GM12878 (cell line): ENCODE measurements at regions of chr2 and their contacts with region 1.

Region 1: DNA sequence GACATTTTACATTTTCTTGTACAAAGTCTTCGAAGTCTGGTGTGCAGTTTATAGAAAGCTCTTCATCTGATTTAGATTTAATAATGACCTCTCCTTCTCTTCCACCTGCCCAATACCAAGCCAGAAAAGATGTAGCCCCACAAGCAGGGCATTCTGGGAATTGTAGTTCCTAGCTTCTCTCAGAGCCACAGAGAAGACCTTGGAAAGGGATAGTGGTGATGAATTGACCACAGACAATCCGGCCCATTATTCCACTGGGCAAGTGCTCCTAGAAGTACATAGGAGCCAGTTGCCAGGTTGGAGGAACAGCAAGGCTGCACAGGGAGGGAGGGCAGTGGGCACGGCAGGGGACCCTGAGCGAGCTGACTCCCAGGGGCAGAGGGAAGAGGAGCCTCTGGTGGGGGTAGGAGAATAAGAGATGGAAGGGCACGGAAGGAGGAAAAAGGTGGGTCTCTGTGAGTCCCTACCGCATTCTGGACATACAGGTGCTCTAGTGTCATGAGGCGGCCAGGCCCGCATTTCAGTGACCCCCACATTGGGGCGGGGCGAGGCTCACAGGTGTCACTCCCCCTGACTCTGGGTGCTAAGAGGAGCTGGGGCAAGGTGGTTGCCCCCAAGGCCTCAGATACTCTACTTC is 152.5 kb upstream of the HAAO start:
- DNase-seq: no peak
- ATAC-seq: peak; percentile 39; the same call in 2 of the 3 replicates
- H3K4me3 ChIP-seq: no peak overlapping the region
- H3K27ac ChIP-seq: no peak overlapping the region
- H3K4me1 ChIP-seq: no peaks in the 10 kb centered on the region
- H3K27me3 ChIP-seq: no peaks in the 10 kb centered on the region
- CTCF ChIP-seq: no peak
- EP300 ChIP-seq: no peak
- POLR2A ChIP-seq: no peak
- RAD21 ChIP-seq: no peak

Region 2: GRCh38 chr2:42859006-42859552 is 85.8 kb before region 1 on chr2:
- CTCF ChIA-PET with region 1: interaction called, 51 read pairs
- POLR2A ChIA-PET with region 1: no interaction called
- RAD21 ChIA-PET with region 1: interaction called, 7 read pairs
- SMC1A ChIA-PET with region 1: interaction called, 12 read pairs
- in situ Hi-C with region 1: no loop called
- intact Hi-C with region 1: loop called (anchors 5 kb)
- DNase-seq: peak; percentile 52
- ATAC-seq: peak; percentile 70
- H3K4me3 ChIP-seq: no peak overlapping the region
- H3K27ac ChIP-seq: no peak overlapping the region
- H3K4me1 ChIP-seq: no peaks in the 10 kb centered on the region
- H3K27me3 ChIP-seq: peaks cover 0 to 2% of the 10 kb centered on the region in 2 experiments; a peak in 1 of 4 replicates
- CTCF ChIP-seq: peak; percentile 68 to 90 (median 86)
- EP300 ChIP-seq: no peak
- POLR2A ChIP-seq: no peak
- RAD21 ChIP-seq: peak; percentile 94

Region 3: GRCh38 chr2:42974721-42975717 is 30.1 kb after region 1 on chr2:
- CTCF ChIA-PET with region 1: interaction called, 18 read pairs
- POLR2A ChIA-PET with region 1: no interaction called
- RAD21 ChIA-PET with region 1: interaction called, 16 read pairs
- SMC1A ChIA-PET with region 1: interaction called, 4 read pairs
- in situ Hi-C with region 1: no loop called
- intact Hi-C with region 1: no loop called
- DNase-seq: no peak
- ATAC-seq: peak; percentile 67
- H3K4me3 ChIP-seq: no peak overlapping the region
- H3K27ac ChIP-seq: no peak overlapping the region
- H3K4me1 ChIP-seq: peaks cover 14% of the 10 kb centered on the region
- H3K27me3 ChIP-seq: peaks cover 0 to 1% of the 10 kb centered on the region in 2 experiments; a peak in 1 of 4 replicates
- CTCF ChIP-seq: peak; percentile 56 to 88 (median 83)
- EP300 ChIP-seq: no peak
- POLR2A ChIP-seq: no peak
- RAD21 ChIP-seq: peak; percentile 77

Region 4: DNA sequence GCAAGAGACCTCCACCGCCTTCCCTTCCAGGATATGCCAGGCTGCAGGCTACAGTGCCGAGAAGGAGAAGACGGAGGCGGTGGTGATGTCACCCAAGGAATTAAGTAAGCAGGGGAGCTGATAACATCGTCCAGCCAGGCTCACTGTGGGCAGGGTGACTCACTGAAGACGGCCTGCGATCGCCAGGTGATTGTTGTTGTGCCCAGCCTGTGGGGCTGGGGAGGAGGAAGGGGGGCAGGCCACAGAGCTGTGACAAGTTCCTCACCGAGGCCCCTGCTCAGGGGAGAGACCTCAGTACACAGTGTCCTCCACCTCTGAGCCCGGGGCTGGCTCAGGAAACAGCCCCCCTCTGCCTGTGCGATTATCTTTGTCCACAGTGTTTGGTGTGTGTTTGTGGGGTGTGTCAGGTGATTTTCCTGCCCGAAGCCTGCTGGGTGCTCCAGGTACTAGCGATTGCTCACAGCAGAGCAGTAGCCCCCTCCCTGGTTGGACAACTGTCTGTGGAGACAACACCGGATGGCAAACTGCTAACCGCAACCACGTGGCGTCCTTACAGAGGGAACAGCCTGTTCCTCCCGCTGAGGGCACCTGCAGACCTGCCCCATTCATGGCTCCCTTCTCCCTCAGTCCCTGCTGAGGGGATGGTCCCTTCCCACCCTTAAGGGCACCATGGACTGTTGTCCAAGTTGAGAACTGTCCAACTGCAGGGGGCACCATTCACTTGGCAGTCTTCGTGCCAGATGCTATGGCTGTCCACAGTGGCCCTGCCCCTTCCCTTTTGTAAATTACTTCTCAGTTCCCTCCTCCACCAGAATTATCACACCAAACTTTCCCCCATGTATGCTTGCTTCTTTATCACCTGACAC is 186.4 kb after region 1 on chr2:
- CTCF ChIA-PET with region 1: interaction called, 6 read pairs
- POLR2A ChIA-PET with region 1: no interaction called
- RAD21 ChIA-PET with region 1: interaction called, 6 read pairs
- SMC1A ChIA-PET with region 1: interaction called, 10 read pairs
- in situ Hi-C with region 1: no loop called
- intact Hi-C with region 1: loop called (anchors 5 kb)
- DNase-seq: no peak
- ATAC-seq: peak; percentile 81
- H3K4me3 ChIP-seq: no peak overlapping the region
- H3K27ac ChIP-seq: no peak overlapping the region
- H3K4me1 ChIP-seq: peaks cover 43% of the 10 kb centered on the region
- H3K27me3 ChIP-seq: no peaks in the 10 kb centered on the region
- CTCF ChIP-seq: peak; percentile 61 to 82 (median 62); a peak in 5 of 6 replicates
- EP300 ChIP-seq: no peak; a peak in 1 of 4 replicates
- POLR2A ChIP-seq: no peak
- RAD21 ChIP-seq: peak; percentile 78

Region 5: DNA sequence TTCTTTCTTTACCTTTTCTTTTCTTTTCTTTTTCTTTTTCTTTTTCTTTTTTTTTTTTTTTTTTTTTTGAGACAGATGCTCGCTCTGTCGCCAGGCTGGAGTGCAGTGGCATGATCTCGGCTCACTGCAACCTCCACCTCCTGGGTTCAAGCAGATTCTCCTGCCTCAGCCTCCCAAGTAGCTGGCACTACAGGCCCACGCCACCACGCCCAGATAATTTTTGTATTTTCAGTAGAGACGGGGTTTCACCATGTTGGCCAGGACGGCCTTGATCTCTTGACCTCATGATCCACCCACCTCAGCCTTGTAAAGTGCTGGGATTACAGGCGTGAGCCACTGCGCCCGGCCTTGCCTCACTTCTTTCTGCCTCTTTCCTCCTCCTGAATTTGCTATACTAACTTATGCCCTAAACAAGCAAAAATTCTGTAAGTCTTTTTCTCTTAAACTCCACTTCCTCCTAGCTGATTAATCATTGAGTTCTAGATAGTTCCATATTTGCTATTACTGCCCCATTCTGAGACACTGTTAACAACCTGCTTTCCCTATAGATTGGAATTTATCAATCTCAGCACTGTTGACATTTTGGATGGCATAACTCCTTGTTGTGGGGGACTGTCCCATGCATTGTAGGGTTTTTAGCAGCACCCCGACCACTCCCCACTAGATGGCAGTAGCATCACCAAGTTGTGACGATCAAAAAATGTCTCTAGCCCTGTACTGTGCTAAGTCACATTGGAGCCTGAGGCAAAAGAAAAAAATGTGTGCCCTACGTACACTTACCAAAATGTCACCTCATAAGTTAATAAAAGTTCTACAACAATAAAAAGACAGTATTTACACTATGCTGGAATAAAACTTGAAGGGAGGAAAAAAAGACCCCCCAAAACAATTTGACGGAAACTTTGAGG is 667.3 kb after region 1 on chr2:
- CTCF ChIA-PET with region 1: interaction called, 5 read pairs
- POLR2A ChIA-PET with region 1: no interaction called
- RAD21 ChIA-PET with region 1: interaction called, 3 read pairs
- SMC1A ChIA-PET with region 1: interaction called, 8 read pairs
- in situ Hi-C with region 1: no loop called
- intact Hi-C with region 1: loop called (anchors 2 kb)
- DNase-seq: peak; percentile 17
- ATAC-seq: peak; percentile 97
- H3K4me3 ChIP-seq: no peak overlapping the region
- H3K27ac ChIP-seq: no peak overlapping the region
- H3K4me1 ChIP-seq: no peaks in the 10 kb centered on the region
- H3K27me3 ChIP-seq: no peaks in the 10 kb centered on the region; a peak in 1 of 4 replicates
- CTCF ChIP-seq: peak; percentile 78 to 85 (median 84)
- EP300 ChIP-seq: no peak
- POLR2A ChIP-seq: no peak
- RAD21 ChIP-seq: peak; percentile 64